PC-3 (cell line): ENCODE measurements at regions of chr12 and their contacts with region 1.

Region 1: DNA sequence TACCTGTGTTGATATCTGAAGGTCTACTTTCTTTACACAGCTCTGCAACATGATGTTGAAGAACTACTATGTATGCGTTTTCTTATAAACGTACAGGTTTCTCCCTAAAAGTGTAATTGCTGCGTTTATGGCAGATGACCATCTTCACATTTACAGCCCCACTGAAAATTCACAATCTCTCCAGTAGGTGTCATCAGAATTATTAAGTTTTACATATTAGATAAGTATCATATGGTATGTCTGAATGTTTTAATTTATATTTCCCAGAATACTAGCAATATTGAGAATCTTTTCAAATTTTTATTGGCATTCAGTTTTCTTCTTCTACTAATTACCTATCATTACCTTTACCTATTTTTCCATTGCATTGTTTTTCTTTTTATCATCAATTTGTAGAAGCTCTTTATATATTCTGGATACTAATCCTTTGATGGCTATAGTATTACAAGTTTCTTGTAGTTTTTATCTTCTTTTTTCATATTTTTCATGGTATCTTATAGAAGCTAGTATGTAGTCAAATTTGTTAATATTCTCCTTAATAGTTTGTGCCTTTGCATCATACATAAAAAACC is 123.5 kb downstream of the CAPZA3 start:
- DNase-seq: peak; percentile 72
- ATAC-seq: no peak
- H3K4me3 ChIP-seq: no peak overlapping the region
- H3K27ac ChIP-seq: no peak overlapping the region
- H3K4me1 ChIP-seq: peaks cover 10% of the 10 kb centered on the region; the same call in 1 of the 2 replicates
- H3K27me3 ChIP-seq: no peaks in the 10 kb centered on the region
- CTCF ChIP-seq: peak; percentile 64

Region 2: GRCh38 chr12:18430425-18431048 is 430.8 kb before region 1 on chr12:
- CTCF ChIA-PET with region 1: no interaction called
- POLR2A ChIA-PET with region 1: no interaction called
- intact Hi-C with region 1: loop called (anchors 5 kb)
- DNase-seq: peak; percentile 69
- ATAC-seq: peak; percentile 65
- H3K4me3 ChIP-seq: no peak overlapping the region
- H3K27ac ChIP-seq: no peak overlapping the region
- H3K4me1 ChIP-seq: peaks cover 13% of the 10 kb centered on the region
- H3K27me3 ChIP-seq: no peaks in the 10 kb centered on the region
- CTCF ChIP-seq: peak; percentile 83

Region 3: GRCh38 chr12:18982226-18982949 is 121.0 kb after region 1 on chr12:
- CTCF ChIA-PET with region 1: no interaction called
- POLR2A ChIA-PET with region 1: no interaction called
- intact Hi-C with region 1: no loop called
- DNase-seq: no peak
- ATAC-seq: no peak
- H3K4me3 ChIP-seq: no peak overlapping the region
- H3K27ac ChIP-seq: no peak overlapping the region
- H3K4me1 ChIP-seq: no peaks in the 10 kb centered on the region
- H3K27me3 ChIP-seq: no peaks in the 10 kb centered on the region
- CTCF ChIP-seq: no peak

Region 4: DNA sequence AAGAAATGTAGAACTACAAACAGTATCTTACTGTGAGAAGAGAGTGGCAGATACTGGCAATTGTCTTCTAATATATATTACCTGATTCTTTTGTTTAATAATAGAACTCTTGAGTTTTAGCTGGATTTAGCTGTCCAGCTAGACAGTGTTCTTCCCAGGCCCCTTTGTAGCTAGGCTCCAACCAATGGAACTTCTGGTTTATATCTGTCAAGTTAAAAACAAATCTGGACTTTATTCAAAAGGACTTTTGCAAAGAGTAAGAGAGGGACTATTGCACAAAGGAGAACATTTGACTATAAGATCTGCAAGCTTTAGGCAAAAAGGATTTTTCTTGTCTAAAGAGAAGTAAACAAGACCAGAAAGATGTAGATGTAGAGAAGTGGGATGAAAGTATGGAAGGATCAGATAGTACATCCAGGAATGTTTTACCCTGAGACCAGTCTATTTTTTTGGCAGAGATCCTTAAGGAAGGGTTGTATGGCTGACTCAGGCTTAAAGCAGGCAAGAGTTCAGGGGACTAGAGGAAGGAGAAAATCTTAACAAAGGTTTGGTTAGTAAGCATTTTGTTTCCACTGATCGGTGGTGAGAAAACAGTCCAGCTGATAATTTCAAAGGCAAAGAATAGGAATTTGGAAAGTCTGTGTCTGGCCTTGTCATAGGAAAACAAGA is 157.1 kb after region 1 on chr12:
- CTCF ChIA-PET with region 1: no interaction called
- POLR2A ChIA-PET with region 1: no interaction called
- intact Hi-C with region 1: loop called (anchors 10 kb)
- DNase-seq: peak; percentile 77
- ATAC-seq: peak; percentile 85
- H3K4me3 ChIP-seq: 0 out of 2 replicates have a peak overlapping the region, but pooled peaks have one; percentile 17
- H3K27ac ChIP-seq: peak overlapping the region; percentile 78
- H3K4me1 ChIP-seq: peaks cover 54% of the 10 kb centered on the region
- H3K27me3 ChIP-seq: no peaks in the 10 kb centered on the region
- CTCF ChIP-seq: no peak

Region 5: DNA sequence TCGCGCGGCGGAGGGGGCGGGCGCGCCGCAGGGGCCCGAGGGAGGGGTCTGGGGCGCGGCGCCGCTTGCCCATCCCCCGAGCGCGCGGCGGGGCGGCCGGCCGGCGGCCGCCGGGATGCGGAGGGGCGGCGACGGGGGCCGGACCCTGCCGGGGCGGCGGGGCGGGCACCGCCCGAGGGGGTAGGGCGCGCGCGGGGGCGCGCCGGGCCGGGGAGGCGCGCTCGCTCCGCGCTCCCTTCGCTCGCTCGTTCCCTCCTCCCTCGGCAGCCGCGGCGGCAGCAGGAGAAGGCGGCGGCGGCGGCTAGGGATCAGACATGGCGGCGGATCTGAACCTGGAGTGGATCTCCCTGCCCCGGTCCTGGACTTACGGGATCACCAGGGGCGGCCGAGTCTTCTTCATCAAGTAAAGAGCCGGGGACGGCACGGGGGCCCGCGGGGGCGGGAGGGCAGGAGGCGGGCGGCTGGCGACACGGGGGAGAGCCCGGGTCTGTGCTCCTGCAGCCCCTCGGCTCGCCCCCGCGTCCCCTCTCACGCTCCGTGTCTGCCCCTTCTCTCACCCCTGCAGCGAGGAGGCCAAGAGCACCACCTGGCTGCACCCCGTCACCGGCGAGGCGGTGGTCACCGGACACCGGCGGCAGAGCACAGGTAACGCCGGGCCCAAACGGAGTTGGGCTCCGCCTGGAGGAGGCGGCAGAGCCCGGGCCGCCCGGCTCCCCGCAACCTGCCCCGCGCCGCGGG is 268.3 kb after region 1 on chr12 and contains the start of gene PLEKHA5:
- CTCF ChIA-PET with region 1: no interaction called
- POLR2A ChIA-PET with region 1: no interaction called
- intact Hi-C with region 1: loop called (anchors 1 kb)
- DNase-seq: peak; percentile 64
- ATAC-seq: peak; percentile 54
- H3K4me3 ChIP-seq: peak within 1 kb of the TSS; percentile 97
- H3K27ac ChIP-seq: peak within 1 kb of the TSS; percentile 59
- H3K4me1 ChIP-seq: peaks cover 20% of the 10 kb centered on the region
- H3K27me3 ChIP-seq: no peaks in the 10 kb centered on the region
- CTCF ChIP-seq: no peak; the same call in 1 of the 2 replicates
- total RNA-seq, gene PLEKHA5: 16.7 and 18.4 TPM in 2 replicates

Region 6: DNA sequence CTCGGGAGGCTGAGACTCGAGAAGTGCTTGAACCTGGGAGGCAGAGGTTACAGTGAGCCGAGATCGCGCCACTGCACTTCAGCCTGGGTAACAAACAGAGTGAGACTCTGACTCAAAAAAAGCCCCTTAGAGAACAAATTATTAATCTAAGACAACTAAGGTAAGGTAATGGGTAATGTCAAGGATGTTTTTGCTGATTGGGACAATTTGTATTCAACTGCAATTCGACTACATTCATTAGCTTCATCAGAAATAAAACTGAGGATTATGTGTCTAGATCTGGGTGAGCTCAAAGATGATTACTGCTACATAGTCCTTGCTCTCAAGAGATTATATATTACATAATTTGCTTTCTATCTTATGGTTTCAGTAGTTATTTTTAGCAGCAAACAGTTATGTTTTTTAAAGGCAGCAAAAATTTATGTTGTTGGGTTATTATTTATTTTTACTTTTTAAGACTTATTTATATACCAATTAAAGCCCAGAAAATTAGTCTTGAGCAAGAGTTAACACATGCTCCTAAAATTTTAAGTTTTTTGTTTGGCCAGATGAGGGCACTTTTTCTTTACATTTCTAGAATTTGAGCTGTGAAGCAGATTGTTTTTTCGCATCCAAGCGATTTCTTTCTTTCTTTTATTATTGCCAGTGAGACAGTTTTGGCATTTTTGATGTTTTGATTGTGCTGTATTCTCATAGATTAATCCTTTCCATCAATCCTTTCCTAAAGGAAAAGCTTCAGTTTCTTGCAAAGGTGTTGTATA is 320.5 kb after region 1 on chr12:
- CTCF ChIA-PET with region 1: no interaction called
- POLR2A ChIA-PET with region 1: no interaction called
- intact Hi-C with region 1: loop called (anchors 1 kb)
- DNase-seq: peak; percentile 13
- ATAC-seq: no peak
- H3K4me3 ChIP-seq: no peak overlapping the region
- H3K27ac ChIP-seq: no peak overlapping the region
- H3K4me1 ChIP-seq: no peaks in the 10 kb centered on the region
- H3K27me3 ChIP-seq: no peaks in the 10 kb centered on the region
- CTCF ChIP-seq: peak; percentile 42; the same call in 1 of the 2 replicates

Region 7: DNA sequence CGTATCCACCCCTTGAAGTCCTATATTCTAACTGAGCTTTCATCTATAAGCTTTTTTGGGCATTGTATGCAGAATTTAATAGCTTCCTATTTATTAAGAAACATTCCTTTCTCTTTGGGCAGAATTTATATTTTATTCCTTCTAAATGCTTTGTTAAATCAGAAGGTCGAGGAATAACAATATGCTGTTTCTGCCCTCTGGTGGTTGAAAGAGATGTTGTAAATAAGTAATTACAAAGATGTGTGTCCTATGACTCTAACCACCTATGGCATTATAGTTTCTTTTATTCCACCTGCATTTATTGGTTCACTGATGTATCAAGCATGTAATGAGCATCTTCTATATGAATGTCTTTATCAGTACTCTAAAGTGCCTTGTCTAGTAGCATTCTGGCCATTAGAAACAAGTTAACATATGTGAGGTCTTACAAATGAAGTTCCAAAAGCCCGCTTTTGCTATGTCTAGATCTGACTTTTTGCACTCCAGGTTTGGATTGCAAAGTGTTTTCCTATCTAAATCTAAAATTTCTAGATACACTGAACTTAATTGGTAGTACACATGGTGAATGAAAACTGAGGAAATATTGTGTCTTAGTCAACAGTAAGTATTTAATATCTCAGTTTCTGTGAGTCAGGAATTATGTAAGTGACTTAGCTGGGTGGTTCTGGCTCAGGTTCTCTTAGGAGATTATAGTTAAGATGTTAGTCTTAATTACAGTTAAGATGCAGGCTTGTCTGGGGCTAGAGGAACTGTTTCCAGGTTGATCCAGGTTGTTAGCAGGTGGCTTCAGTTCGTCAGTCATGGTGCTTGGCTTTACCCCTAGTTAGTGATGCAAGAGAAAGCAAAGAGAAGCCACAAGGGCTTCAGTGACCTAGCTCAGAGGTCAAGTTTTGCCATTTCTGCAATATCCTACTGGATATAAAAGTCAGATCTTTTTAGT is 325.6 kb after region 1 on chr12:
- CTCF ChIA-PET with region 1: no interaction called
- POLR2A ChIA-PET with region 1: no interaction called
- intact Hi-C with region 1: loop called (anchors 1 kb)
- DNase-seq: peak; percentile 68
- ATAC-seq: peak; percentile 35; the same call in 1 of the 2 replicates
- H3K4me3 ChIP-seq: no peak overlapping the region
- H3K27ac ChIP-seq: no peak overlapping the region
- H3K4me1 ChIP-seq: peaks cover 5% of the 10 kb centered on the region
- H3K27me3 ChIP-seq: no peaks in the 10 kb centered on the region
- CTCF ChIP-seq: peak; percentile 74

Region 8: GRCh38 chr12:19288603-19289244 is 427.4 kb after region 1 on chr12:
- CTCF ChIA-PET with region 1: no interaction called
- POLR2A ChIA-PET with region 1: no interaction called
- intact Hi-C with region 1: loop called (anchors 5 kb)
- DNase-seq: peak; percentile 61
- ATAC-seq: peak; percentile 51
- H3K4me3 ChIP-seq: no peak overlapping the region
- H3K27ac ChIP-seq: no peak overlapping the region
- H3K4me1 ChIP-seq: no peaks in the 10 kb centered on the region
- H3K27me3 ChIP-seq: no peaks in the 10 kb centered on the region
- CTCF ChIP-seq: peak; percentile 69